H1 (cell line): ENCODE measurements at regions of chr12 and their contacts with region 1.

Region 1: DNA sequence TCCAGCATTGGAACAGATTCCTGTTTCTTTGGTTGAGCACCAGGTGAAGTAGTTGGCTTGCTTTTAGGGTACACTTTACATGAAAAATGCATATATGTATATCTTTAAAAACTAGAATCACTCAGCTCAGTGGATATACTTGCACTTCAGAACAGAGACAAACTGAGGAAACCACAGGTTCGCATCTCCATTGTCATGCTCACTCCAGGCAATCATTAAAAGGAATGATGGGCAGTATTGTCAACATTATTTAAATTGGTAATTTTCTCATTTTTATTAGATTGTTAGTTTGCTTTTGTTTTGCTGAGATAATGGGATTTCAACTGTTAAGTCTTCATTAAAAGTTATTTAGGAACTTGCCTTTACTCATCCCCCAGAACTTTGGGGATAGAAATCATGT is 71.0 kb upstream of the NELL2 start:
- DNase-seq: no peak
- H3K4me3 ChIP-seq: peak overlapping the region in 1 of 4 experiments; percentile 37; a peak in 1 of 8 replicates
- H3K27ac ChIP-seq: no peak overlapping the region
- H3K4me1 ChIP-seq: peaks cover 0 to 10% (median 0%) of the 10 kb centered on the region in 4 experiments; a peak in 2 of 7 replicates
- H3K27me3 ChIP-seq: no peaks in the 10 kb centered on the region
- CTCF ChIP-seq: no peak
- EP300 ChIP-seq: no peak
- POLR2A ChIP-seq: no peak
- RAD21 ChIP-seq: no peak

Region 2: DNA sequence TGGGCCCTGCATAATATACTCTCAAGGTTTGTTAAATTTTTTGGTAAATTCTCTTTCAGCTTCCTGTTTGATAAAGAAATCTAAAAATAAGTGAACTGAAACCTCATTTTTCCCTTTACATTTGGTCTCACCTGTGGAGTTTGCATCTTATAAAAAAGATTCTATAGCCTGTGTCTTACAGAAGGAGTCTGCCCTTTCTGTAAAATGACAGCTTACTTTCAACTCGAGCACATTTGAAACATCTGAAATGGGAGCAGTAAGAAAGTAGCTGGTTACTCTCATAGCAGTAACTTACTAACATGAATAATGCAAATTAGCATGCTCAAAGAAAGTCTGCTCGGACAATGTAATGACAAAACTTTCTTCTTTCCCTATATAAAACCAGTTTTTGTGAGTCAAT is 226.9 kb before region 1 on chr12:
- CTCF ChIA-PET with region 1: no interaction called
- POLR2A ChIA-PET with region 1: no interaction called
- DNase-seq: no peak
- H3K4me3 ChIP-seq: no peak overlapping the region
- H3K27ac ChIP-seq: no peak overlapping the region
- H3K4me1 ChIP-seq: no peaks in the 10 kb centered on the region
- H3K27me3 ChIP-seq: no peaks in the 10 kb centered on the region
- CTCF ChIP-seq: no peak
- EP300 ChIP-seq: no peak
- POLR2A ChIP-seq: no peak
- RAD21 ChIP-seq: no peak

Region 3: DNA sequence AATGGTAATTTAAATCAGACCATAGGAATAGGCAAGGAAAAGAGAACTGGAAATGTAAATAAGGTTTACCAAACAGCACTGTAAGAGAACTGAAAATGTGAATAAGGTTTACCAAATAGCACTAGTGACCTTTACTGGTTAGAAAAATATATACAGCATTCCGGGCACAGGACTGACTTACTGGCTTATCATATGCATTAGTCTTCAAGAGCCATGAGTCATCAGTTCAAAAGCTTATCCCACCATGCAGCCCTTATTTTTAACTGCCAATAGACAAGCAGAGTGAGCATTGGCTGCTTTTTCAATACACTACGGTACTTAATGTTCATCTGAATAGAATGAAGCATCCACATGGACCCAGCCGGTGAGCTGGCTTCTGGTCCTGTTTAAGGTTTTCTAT is 58.0 kb before region 1 on chr12:
- CTCF ChIA-PET with region 1: no interaction called
- POLR2A ChIA-PET with region 1: no interaction called
- DNase-seq: no peak
- H3K4me3 ChIP-seq: no peak overlapping the region
- H3K27ac ChIP-seq: no peak overlapping the region
- H3K4me1 ChIP-seq: no peaks in the 10 kb centered on the region
- H3K27me3 ChIP-seq: no peaks in the 10 kb centered on the region
- CTCF ChIP-seq: no peak
- EP300 ChIP-seq: no peak
- POLR2A ChIP-seq: no peak
- RAD21 ChIP-seq: no peak

Region 4: GRCh38 chr12:44930972-44931600 is 16.1 kb before region 1 on chr12:
- CTCF ChIA-PET with region 1: interaction called, 11 read pairs
- POLR2A ChIA-PET with region 1: no interaction called
- DNase-seq: no peak
- H3K4me3 ChIP-seq: peak overlapping the region in 1 of 4 experiments; percentile 1; a peak in 1 of 8 replicates
- H3K27ac ChIP-seq: no peak overlapping the region
- H3K4me1 ChIP-seq: no peaks in the 10 kb centered on the region
- H3K27me3 ChIP-seq: no peaks in the 10 kb centered on the region
- CTCF ChIP-seq: peak in 2 of 3 experiments; percentile 34 to 45; a peak in 2 of 4 replicates
- EP300 ChIP-seq: no peak
- POLR2A ChIP-seq: no peak
- RAD21 ChIP-seq: peak; percentile 63 to 73

Region 5: DNA sequence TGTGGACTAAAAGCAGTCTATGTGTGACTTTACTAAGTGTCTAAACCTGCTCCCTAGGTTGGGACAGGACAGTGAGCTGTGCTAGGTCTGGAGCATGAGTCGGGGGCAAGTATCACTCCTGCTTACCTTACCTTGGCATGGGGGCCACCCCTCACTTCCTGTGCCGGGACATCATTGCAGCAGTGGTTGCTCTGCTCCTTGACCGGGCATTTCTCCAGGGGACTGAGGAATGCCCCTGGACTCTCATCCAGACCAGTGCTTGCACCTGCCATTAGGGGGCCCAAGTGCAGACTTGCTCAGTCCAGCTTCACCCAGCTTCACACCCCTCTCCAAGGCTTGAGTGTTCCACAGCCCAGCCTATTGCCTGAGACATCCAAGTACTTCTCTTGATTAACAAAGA is 13.7 kb after region 1 on chr12:
- CTCF ChIA-PET with region 1: interaction called, 41 read pairs
- POLR2A ChIA-PET with region 1: interaction called, 4 read pairs
- DNase-seq: peak in 1 of 2 experiments; percentile 61
- H3K4me3 ChIP-seq: no peak overlapping the region; a peak in 1 of 8 replicates
- H3K27ac ChIP-seq: no peak overlapping the region
- H3K4me1 ChIP-seq: peaks cover 2 to 8% (median 5%) of the 10 kb centered on the region in 4 experiments; a peak in 6 of 7 replicates
- H3K27me3 ChIP-seq: no peaks in the 10 kb centered on the region
- CTCF ChIP-seq: peak; percentile 53 to 70 (median 70)
- EP300 ChIP-seq: no peak
- POLR2A ChIP-seq: no peak
- RAD21 ChIP-seq: peak; percentile 28 to 52; a peak in 3 of 4 replicates

Region 6: DNA sequence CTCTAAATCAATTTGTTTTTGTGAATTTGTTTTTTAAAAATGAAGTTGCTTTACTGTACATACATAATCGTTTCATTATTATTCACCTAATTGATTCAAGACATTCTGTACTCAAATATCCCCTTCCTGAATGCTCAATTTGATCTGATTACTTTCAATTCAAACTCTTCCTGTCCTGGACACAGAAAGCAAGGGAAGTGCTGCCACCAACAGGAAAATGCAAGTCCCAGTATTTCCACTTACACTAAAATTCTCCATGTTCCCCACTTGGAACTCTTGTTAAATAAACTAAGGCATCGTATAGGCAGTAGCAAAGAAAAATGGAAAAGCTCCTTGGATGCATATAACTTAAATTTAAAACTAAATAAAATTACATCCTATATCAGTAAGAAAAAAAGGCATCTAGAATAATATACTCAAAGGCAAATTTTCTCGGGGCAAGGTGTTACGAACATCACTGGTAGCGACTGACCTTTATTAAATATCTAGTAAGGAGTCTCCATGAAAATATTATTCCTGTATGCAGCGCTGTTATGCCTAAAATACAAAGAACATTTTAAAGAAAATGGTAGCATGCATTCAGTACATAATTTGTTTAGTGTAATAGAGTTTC is 175.7 kb after region 1 on chr12:
- CTCF ChIA-PET with region 1: interaction called, 12 read pairs
- POLR2A ChIA-PET with region 1: no interaction called
- DNase-seq: no peak
- H3K4me3 ChIP-seq: no peak overlapping the region
- H3K27ac ChIP-seq: no peak overlapping the region
- H3K4me1 ChIP-seq: no peaks in the 10 kb centered on the region
- H3K27me3 ChIP-seq: no peaks in the 10 kb centered on the region
- CTCF ChIP-seq: peak in 2 of 3 experiments; percentile 60 to 71; a peak in 3 of 4 replicates
- EP300 ChIP-seq: no peak
- POLR2A ChIP-seq: no peak
- RAD21 ChIP-seq: peak; percentile 85 to 88